Right cardiac atrium (tissue), 5 donors: ENCODE measurements at regions of chr2 and their contacts with region 1.

Region 1: DNA sequence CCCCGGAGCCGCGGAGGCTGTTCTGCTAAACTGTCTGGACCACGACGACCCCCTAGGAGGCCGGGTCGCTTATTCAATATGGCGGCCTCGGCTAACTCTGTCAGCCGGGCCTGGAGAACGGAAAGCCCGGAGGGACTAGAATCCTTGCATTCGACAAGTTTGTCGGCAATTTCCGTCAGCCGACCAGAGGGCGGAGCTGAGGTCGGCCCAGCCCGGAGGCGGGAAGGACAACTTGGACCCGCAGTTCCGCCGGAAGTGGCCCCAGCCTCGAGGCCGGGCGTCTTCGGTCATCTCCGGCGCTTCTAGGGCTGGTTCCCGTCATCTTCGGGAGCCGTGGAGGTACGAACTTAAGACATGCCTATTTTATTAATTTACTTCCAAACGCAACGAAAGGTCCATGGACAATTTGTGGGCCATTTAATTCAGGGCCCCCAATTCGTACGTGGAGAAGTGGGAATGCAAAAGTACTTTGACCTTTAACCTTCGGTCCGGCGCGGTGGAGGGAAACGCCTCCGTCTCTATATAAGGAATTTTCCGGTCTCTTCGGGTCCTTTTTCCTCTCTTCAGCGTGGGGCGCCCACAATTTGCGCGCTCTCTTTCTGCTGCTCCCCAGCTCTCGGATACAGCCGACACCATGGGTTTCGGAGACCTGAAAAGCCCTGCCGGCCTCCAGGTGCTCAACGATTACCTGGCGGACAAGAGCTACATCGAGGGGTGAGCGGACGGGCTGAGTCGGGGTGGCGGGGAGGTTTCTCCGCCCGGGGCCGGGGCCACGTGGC is at the starts of genes EEF1B2 and NDUFS1:
- DNase-seq: peak; percentile 98
- ATAC-seq: peak; percentile 96 to 98
- H3K4me3 ChIP-seq: peak within 1 kb of the TSS; percentile 95
- H3K27ac ChIP-seq: peak within 1 kb of the TSS; percentile 93
- H3K4me1 ChIP-seq: peaks cover 2% of the 10 kb centered on the region
- H3K27me3 ChIP-seq: no peaks in the 10 kb centered on the region
- total RNA-seq, gene EEF1B2: 258 to 346 (median 302) TPM
- total RNA-seq, gene NDUFS1: 250 to 299 (median 253) TPM

Region 2: DNA sequence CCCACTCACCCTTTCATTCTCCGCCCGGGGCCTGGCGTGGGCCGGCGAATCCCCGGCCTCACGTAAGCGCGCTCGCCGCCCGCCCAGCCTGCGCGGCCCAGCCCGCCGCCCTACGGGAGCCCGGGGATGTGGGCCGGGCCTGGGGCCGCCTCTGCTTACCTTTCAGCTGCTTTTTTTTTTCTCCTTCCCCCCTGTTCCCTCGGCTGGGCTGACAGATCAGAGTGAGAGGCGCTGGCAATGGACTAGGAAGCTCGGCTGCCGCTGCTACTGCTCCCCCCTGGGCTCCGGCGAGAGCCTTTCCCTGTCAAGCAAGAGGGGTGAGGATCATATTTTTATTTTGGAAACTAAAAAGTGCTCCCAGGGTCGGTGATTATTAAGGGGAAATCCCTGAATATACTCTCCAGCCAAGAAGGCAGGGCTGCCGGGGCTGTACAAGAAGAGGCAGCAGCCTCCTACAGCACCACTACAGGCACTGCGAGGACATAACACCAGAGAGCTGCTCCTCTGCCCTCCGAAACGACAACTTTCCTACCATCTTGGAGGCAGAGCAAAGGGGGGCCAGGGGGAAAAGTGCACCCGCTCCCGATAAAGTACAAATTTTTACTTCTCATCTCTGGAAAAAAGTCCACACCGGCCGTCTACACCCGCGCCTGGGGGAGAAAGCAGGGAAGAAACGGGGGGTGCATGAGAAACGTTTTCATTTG is 73.6 kb before region 1 on chr2 and contains the start of gene INO80D:
- intact Hi-C with region 1: no loop called
- DNase-seq: peak; percentile 81 to 87 (median 85)
- ATAC-seq: peak; percentile 89 to 92
- H3K4me3 ChIP-seq: peak within 1 kb of the TSS; percentile 99
- H3K27ac ChIP-seq: peak within 1 kb of the TSS; percentile 93
- H3K4me1 ChIP-seq: peaks cover 4% of the 10 kb centered on the region
- H3K27me3 ChIP-seq: no peaks in the 10 kb centered on the region
- total RNA-seq, gene INO80D: 12.2 to 16.4 (median 14.5) TPM

Region 3: GRCh38 chr2:206212673-206213513 is 53.4 kb after region 1 on chr2:
- intact Hi-C with region 1: no loop called
- DNase-seq: no peak
- ATAC-seq: no peak
- H3K4me3 ChIP-seq: peak overlapping the region; percentile 39
- H3K27ac ChIP-seq: no peak overlapping the region
- H3K4me1 ChIP-seq: no peaks in the 10 kb centered on the region
- H3K27me3 ChIP-seq: no peaks in the 10 kb centered on the region

Region 4: DNA sequence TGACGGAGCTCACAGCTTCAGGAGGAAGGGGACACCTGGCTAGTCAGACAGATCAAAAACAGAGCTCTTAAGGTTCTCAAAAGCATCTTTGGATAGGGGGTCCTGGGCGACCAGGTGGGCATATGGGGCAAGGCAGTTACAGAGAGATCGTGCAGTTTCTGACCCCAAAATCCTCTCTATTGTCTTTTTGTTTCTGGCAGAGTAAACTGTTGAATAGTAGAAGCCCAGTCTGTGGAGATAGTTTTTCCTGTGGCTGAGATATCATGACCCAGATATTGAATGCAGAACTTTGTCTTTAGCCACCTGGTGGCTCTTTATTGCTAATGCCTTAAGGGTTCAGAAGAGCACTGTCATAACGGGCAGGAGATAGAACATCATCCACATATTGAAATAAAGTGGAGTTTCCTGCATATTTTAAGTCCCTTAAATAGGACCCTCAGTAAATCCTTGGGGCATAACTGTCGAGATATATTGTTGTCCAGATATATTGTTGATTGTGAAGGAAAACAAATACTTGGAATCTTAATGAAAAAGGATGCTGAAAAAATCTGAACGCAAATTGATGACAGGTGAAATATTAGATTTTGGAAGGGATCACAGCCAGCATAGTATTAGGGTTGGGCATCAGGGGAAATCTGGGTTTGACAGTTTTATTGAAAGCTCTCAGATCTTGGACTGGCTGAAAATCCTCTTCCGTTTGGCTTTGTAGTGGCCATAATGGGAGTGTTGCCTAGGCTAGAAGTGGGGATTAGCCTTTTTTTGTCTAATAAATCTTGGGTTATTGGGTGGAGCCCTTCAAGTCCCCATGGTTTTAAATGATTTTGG is 100.9 kb after region 1 on chr2:
- intact Hi-C with region 1: loop called in 1 of 4 experiments (anchors 10 kb)
- DNase-seq: no peak
- ATAC-seq: peak; percentile 56 to 64
- H3K4me3 ChIP-seq: no peak overlapping the region
- H3K27ac ChIP-seq: no peak overlapping the region
- H3K4me1 ChIP-seq: no peaks in the 10 kb centered on the region
- H3K27me3 ChIP-seq: peaks cover 2% of the 10 kb centered on the region

Region 5: GRCh38 chr2:206274434-206275268 is 115.1 kb after region 1 on chr2 and contains the start of gene ZDBF2:
- intact Hi-C with region 1: loop called in 2 of 4 experiments (anchors 10 kb)
- DNase-seq: peak; percentile 54 to 73 (median 69)
- ATAC-seq: peak; percentile 89 to 94
- H3K4me3 ChIP-seq: peak within 1 kb of the TSS; percentile 80
- H3K27ac ChIP-seq: peak within 1 kb of the TSS; percentile 52
- H3K4me1 ChIP-seq: no peaks in the 10 kb centered on the region
- H3K27me3 ChIP-seq: no peaks in the 10 kb centered on the region
- total RNA-seq, gene ZDBF2: 10.0 to 16.2 (median 11.3) TPM

Region 6: DNA sequence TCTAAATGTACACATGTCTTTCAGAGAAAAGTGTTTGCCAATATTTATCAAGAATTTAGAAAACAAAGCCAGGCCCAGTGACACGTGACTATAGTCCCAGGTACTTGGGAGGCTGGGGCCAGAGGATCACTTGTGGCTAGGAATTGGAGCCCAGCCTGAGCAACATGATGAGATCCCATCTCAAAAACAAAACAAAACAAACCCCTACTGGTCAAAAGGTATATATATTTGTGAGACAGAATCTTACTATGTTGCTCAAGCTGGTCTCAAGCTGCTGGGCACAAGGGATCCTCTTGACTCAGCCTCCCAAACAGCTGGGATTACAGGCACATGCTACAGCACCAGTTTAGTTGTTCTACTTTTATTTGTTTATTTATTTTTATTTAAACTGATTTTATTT is 194.2 kb after region 1 on chr2:
- intact Hi-C with region 1: no loop called
- DNase-seq: no peak
- ATAC-seq: no peak
- H3K4me3 ChIP-seq: no peak overlapping the region
- H3K27ac ChIP-seq: no peak overlapping the region
- H3K4me1 ChIP-seq: no peaks in the 10 kb centered on the region
- H3K27me3 ChIP-seq: no peaks in the 10 kb centered on the region